Activated CD4-positive, alpha-beta T cell treated with anti-CD3 and anti-CD28 coated beads for 36 hours (primary cell): ENCODE measurements at regions of chr9 and their contacts with region 1.

Region 1: DNA sequence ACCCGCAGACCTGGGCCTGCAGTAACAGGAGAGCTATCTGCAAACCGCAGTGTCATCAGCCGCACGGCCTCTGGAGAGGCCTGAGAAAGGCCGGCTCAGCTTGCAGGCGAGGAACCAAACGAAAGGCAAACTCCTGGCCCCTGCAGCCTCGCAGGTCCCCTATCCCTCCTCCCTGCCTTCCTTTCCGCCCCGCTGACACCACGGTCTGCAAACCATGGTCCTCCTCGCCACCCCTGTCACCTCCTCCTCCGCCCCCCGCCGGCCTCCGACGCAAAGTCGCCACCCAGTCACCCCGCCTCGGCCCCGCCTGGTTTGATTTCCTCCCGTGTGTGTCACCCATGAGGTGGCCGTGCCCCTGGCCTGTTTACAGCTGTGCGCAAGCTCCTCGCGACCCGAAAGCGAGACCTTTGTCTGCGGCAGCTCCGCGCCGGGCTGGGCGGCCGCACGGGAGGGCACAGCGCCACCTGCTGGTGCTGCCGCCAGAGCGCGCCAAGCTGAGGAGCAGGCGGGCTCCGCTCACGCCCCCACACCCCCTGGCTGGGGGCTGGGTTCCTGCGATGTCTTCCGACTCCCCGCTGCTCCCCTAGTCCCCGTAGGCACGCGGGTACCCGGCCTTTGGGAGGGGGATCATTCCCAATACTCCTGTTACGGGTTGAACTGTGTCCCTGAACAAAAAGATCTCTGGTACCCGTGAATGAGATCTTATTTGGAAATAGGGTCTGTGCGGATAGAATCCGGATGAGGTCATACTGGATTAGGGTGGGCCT is 19.4 kb downstream of the GBGT1 start:
- DNase-seq: peak; percentile 94
- ATAC-seq: peak; percentile 71
- H3K4me3 Mint-ChIP-seq: peak overlapping the region; percentile 57
- H3K27ac Mint-ChIP-seq: peak overlapping the region; percentile 82
- H3K4me1 Mint-ChIP-seq: peaks cover 62% of the 10 kb centered on the region
- H3K27me3 Mint-ChIP-seq: no peaks in the 10 kb centered on the region

Region 2: DNA sequence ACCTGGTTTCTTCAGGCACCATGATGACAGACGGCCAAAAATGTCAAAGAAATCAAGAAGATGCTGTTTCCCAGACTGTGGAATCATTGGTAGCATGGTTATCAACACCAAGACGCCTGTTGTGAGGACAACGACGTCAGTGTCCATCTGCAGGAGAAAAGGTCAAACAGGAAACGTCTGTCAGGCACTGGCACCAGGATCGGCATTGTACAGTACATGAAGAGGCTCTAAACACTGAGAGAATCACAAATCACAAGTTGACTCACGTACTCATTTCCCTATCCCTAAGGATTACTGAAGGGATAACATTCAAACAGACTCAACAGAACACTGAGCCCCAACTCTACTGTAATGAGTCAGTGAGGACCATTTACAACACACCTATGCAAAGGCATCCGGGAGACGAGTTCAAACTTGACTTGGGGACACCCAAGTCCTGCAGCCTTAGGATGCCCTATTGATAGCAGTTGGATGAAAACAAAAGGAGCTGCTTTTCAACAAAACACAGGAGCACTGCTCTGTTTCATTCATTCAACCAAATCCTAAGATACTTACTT is 220.9 kb before region 1 on chr9:
- CTCF ChIA-PET with region 1: no interaction called
- POLR2A ChIA-PET with region 1: no interaction called
- intact Hi-C with region 1: no loop called
- DNase-seq: no peak
- ATAC-seq: no peak
- H3K4me3 Mint-ChIP-seq: no peak overlapping the region
- H3K27ac Mint-ChIP-seq: no peak overlapping the region
- H3K4me1 Mint-ChIP-seq: no peaks in the 10 kb centered on the region
- H3K27me3 Mint-ChIP-seq: no peaks in the 10 kb centered on the region

Region 3: GRCh38 chr9:133103183-133103986 is 40.9 kb before region 1 on chr9:
- CTCF ChIA-PET with region 1: interaction called, 24 read pairs
- POLR2A ChIA-PET with region 1: interaction called, 3 read pairs
- intact Hi-C with region 1: loop called (anchors 1 kb)
- DNase-seq: peak; percentile 68
- ATAC-seq: peak; percentile 60
- H3K4me3 Mint-ChIP-seq: no peak overlapping the region
- H3K27ac Mint-ChIP-seq: no peak overlapping the region
- H3K4me1 Mint-ChIP-seq: no peaks in the 10 kb centered on the region
- H3K27me3 Mint-ChIP-seq: no peaks in the 10 kb centered on the region

Region 4: GRCh38 chr9:133108794-133109641 is 35.3 kb before region 1 on chr9:
- CTCF ChIA-PET with region 1: interaction called, 139 read pairs
- POLR2A ChIA-PET with region 1: interaction called, 3 read pairs
- intact Hi-C with region 1: no loop called
- DNase-seq: no peak
- ATAC-seq: no peak
- H3K4me3 Mint-ChIP-seq: no peak overlapping the region
- H3K27ac Mint-ChIP-seq: no peak overlapping the region
- H3K4me1 Mint-ChIP-seq: peaks cover 20% of the 10 kb centered on the region
- H3K27me3 Mint-ChIP-seq: no peaks in the 10 kb centered on the region

Region 5: GRCh38 chr9:133133681-133134418 is 10.5 kb before region 1 on chr9:
- CTCF ChIA-PET with region 1: interaction called, 29 read pairs
- POLR2A ChIA-PET with region 1: interaction called, 6 read pairs
- intact Hi-C with region 1: loop called (anchors 1 kb)
- DNase-seq: peak; percentile 95
- ATAC-seq: peak; percentile 84
- H3K4me3 Mint-ChIP-seq: peak overlapping the region; percentile 41
- H3K27ac Mint-ChIP-seq: peak overlapping the region; percentile 98
- H3K4me1 Mint-ChIP-seq: peaks cover 75% of the 10 kb centered on the region
- H3K27me3 Mint-ChIP-seq: no peaks in the 10 kb centered on the region

Region 6: DNA sequence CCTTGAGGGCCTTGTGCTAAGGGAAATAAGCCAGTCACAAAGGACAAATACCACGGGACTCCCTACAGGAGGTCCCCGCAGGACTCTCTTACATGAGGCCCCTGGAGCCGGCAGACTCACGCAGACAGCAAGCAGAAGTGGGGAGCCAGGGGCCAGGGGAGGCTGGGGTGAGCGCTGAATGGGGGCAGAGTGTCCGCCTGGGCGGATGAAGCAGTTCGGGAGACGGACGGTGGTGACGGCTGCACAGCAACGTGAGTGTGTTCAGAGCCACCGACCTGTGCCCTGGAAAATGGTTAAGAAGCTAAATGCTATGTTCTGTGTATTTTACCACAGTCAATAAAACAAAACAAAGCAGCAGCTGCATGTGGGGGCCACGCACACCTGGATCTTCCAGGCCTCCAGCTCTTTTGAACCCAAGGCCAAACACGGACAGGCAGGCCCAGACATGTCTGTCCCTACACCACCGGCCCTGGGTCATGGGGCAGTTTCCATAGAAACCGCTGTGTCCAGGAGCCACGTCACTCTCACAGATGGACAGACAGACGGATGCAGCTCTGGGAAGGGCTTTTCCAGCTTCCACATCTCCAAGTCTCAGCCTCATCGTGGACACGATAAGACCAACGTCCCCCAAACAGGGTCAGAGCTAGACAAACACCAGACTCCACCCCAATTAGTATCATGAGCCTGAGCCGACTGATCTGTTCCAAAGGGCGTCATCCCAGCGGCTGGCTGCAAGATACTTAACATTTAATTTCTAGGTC is 743.9 kb after region 1 on chr9:
- CTCF ChIA-PET with region 1: no interaction called
- POLR2A ChIA-PET with region 1: no interaction called
- intact Hi-C with region 1: no loop called
- DNase-seq: no peak
- ATAC-seq: no peak
- H3K4me3 Mint-ChIP-seq: no peak overlapping the region
- H3K27ac Mint-ChIP-seq: no peak overlapping the region
- H3K4me1 Mint-ChIP-seq: no peaks in the 10 kb centered on the region
- H3K27me3 Mint-ChIP-seq: no peaks in the 10 kb centered on the region